Prostate gland (tissue), 2 donors: ENCODE measurements at regions of chr17 and their contacts with region 1.

Region 1: DNA sequence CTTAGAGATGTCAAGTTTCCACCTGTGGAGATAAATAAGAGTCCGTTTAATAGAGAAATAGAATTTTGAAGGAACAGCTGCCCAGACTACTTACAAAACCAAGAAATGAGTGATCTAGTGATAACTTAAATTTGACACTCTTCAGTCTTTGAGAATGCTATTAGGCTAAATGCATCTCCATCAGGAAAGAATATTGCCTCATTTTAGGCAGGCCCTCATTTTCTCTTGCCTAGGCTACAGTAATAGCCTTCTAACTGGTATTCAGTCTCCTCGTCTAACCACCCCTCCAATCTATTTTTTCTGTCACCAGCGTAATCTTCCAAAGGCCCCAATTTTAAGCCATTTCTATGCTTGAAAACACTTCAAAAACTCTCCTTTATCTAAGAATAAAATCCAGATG is 537.8 kb upstream of the CA10 start:
- DNase-seq: no peak
- H3K4me3 ChIP-seq: no peak overlapping the region
- H3K27ac ChIP-seq: no peak overlapping the region
- H3K4me1 ChIP-seq: no peaks in the 10 kb centered on the region
- H3K27me3 ChIP-seq: no peaks in the 10 kb centered on the region
- CTCF ChIP-seq: no peak
- POLR2A ChIP-seq: no peak

Region 2: DNA sequence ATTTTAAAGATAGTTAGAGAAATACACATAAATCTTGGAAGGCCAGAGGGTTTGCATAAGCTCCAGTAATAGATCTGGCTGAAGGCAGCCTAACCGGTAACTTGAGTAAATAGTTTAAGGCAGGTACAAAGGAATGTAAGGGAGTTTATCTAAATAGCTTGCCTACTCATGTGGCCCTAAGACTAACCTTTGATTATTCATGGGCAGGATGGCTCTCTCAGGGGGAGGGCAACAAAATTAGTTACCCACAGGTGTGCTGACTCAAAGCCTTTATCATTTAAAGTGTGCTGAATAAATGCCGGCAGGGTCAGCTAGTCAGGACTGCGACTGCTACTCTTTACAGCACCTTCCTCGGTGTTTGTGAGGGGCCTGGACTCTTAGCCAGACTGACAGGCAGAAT is 365.1 kb after region 1 on chr17:
- intact Hi-C with region 1: loop called (anchors 5 kb)
- DNase-seq: no peak
- H3K4me3 ChIP-seq: no peak overlapping the region
- H3K27ac ChIP-seq: no peak overlapping the region
- H3K4me1 ChIP-seq: no peaks in the 10 kb centered on the region
- H3K27me3 ChIP-seq: no peaks in the 10 kb centered on the region
- CTCF ChIP-seq: no peak
- POLR2A ChIP-seq: no peak